ENCODE measurements at regions of chr1 and their contacts with region 1.

Region 1: DNA sequence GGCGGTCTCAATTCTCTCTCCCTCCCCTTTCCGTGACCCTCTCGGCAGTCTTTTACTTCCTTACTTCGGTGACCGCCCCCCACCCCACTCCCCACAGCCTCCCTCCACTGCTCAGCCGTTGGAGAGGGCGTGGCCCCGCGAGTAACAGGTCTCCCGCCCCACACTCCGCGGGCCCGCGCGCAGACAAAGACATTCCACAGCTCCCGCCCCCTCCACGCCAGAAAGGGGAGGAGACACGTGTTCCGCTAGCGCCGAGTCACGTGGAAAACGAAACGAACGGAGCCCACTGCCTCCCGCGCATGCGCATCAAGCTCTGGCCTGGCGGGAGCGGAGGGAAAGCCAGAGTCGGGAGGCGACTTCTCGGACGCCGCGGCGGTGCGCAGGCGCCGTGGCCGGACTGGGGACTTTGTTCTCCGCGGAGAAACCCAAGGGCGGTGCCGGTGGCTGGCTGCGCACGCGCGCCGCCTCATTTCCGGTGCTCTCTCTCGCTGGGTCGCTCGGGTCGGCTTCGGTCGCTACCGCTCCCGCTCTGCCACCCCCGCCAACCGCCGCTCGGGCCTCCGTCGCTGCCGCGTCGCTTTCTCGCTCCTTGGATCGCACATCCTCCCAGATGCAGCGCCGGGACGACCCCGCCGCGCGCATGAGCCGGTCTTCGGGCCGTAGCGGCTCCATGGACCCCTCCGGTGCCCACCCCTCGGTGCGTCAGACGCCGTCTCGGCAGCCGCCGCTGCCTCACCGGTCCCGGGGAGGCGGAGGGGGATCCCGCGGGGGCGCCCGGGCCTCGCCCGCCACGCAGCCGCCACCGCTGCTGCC is at the start of gene KHDRBS1:
- DNase-seq: peak; percentile 96 to 98 (median 98)
- H3K4me3 ChIP-seq: peak within 1 kb of the TSS; percentile 73 to 100 (median 98)
- H3K27ac ChIP-seq: peak within 1 kb of the TSS; percentile 81 to 100 (median 97)
- H3K27me3 ChIP-seq: no peaks in the 10 kb centered on the region
- CTCF ChIP-seq: peak in 28 of 56 donors; percentile 5 to 51 (median 26)
- total RNA-seq, gene KHDRBS1: 50.0 to 101 (median 75.5) TPM

Region 2: GRCh38 chr1:31644560-31645273 is 368.9 kb before region 1 on chr1 and contains the start of gene PEF1:
- intact Hi-C with region 1: loop called in 1 of 2 experiments (anchors 5 kb)
- DNase-seq: peak; percentile 99 to 100 (median 99)
- H3K4me3 ChIP-seq: peak within 1 kb of the TSS; percentile 68 to 100 (median 93)
- H3K27ac ChIP-seq: peak within 1 kb of the TSS; percentile 68 to 99 (median 96)
- H3K27me3 ChIP-seq: no peaks in the 10 kb centered on the region
- CTCF ChIP-seq: peak in 6 of 56 donors; percentile 8 to 19 (median 14)
- total RNA-seq, gene PEF1: 41.8 to 80.3 (median 60.8) TPM

Region 3: GRCh38 chr1:31753707-31754349 is 259.8 kb before region 1 on chr1:
- intact Hi-C with region 1: no loop called
- DNase-seq: peak; percentile 88 to 94 (median 92)
- H3K4me3 ChIP-seq: peak overlapping the region in 45 of 59 donors; percentile 1 to 47 (median 25)
- H3K27ac ChIP-seq: peak overlapping the region; percentile 51 to 96 (median 91)
- H3K27me3 ChIP-seq: no peaks in the 10 kb centered on the region
- CTCF ChIP-seq: peak in 13 of 56 donors; percentile 8 to 42 (median 18)

Region 4: DNA sequence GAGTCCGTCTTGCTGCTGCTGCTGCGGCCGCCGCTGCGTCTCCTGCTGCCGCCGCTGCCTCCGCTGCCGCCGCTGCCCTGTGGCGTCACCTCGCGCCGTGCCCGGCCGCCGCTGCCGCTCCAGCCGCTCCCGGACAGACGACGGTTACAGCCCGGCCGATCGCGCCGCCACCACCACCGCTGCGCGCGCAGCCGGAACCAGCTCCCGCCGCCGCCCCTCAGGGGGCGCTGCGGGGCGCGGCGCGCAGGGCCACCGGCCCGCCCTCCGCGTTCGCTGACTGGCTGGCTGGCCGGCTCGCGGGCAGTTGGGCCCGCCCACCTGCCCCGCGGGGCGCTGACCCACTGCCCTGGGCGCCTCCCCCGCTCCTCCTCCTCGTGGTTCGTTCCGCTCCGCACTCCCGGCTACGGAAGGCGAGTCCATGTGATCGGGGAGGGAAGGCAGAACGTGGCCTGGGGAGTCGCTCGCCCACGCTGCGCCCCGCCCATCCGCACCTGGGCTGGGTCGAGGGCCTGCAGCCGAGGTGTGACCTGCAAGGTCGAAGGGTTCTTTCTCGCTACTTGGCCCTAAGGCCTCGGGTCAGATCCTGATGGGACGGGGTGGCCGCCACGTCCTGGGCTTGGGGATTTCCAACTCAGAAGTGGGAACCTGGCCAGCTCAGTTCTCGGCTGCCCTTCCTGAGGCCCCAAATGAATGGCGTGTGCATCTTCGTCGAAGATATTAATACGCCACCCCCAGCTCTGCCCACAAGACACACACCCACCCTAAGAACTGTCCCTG is 75.2 kb before region 1 on chr1 and contains the start of gene PTP4A2:
- intact Hi-C with region 1: loop called in 1 of 2 experiments (anchors 5 kb)
- DNase-seq: peak; percentile 81 to 94 (median 90)
- H3K4me3 ChIP-seq: peak within 1 kb of the TSS; percentile 51 to 91 (median 76)
- H3K27ac ChIP-seq: peak within 1 kb of the TSS; percentile 78 to 98 (median 91)
- H3K27me3 ChIP-seq: no peaks in the 10 kb centered on the region
- CTCF ChIP-seq: peak in 44 of 56 donors; percentile 7 to 82 (median 51)
- total RNA-seq, gene PTP4A2: 185 to 784 (median 393) TPM

Region 5: DNA sequence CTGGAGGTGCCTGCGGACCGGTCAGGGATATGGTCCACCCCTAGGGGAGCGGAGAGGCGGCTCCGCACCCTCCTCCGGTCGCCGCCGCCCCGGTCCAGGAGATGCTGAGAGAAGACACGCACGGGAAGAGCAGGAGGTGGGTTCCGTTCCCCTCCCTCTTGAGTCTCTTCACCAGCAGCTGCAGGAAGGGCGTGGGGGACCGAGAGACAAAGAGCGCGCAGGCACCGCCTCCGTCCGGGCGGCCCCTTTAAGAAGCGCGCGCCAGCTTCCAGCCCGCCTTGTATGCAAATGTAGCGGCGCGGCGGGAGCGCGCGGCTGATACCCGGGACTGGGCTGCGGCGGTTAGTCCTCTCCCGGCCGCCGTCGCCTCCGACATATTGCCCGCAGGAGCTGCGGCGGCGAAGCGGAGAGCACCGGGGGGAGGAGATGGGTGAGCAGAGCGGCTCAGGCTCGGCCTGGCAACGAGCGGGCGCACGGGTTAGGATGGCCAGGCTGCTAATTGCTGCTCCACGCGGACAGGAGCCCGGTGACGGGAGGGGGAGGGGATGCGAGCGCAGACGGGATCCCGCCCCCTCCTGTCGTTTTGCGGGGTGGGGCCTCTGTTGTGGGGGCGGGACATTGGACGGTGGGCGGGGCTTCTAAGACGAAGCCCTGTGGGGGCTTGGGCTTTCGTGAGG is 59.2 kb after region 1 on chr1 and contains the start of gene TMEM39B:
- intact Hi-C with region 1: loop called (anchors 1 to 2 kb)
- DNase-seq: peak; percentile 92 to 97 (median 96)
- H3K4me3 ChIP-seq: peak within 1 kb of the TSS; percentile 59 to 96 (median 81)
- H3K27ac ChIP-seq: peak within 1 kb of the TSS; percentile 61 to 99 (median 96)
- H3K27me3 ChIP-seq: no peaks in the 10 kb centered on the region
- CTCF ChIP-seq: peak in 28 of 56 donors; percentile 10 to 40 (median 22)
- total RNA-seq, gene TMEM39B: 14.3 to 30.7 (median 20.7) TPM